Activated naive CD4-positive, alpha-beta T cell treated with anti-CD3 and anti-CD28 coated beads for 36 hours (primary cell): ENCODE measurements at regions of chr12 and their contacts with region 1.

Region 1: DNA sequence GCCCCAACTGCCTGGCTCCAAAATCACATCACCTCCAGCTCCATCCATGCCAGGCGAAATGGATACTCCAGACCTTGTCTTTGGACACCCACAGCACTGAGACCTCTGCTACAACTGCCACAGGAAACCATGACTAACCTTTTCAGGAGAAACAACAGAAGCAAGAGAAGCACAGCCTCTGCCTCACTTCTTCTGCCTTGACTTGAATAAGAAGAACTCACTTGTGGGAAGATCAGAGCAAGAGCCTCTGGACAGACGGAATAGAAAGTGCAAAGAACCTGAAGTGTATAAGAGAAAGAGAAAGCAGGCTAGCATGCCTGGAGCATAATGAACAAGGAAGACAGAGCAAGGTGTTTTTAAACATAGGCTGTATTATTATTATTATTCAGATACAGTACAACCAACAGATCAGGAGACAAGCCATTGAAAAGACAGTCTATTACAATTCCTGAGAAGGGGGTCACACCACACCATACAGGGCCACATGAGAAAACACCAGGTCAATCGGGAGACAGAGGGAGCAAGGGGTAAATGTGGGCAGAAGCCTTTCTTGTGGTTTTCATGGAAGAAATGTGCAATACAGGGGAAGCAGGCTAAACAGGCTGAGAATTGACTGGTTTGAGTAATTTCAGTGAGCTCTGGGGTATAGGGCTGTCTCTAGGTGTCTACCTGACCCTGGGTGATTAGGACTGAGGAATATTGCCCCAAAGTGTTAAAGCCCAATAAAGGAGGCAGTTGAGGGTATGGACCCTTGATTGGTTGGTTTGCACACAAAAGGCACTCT is 7.4 kb upstream of the OR10P1 start:
- DNase-seq: peak; percentile 39
- H3K4me3 Mint-ChIP-seq: no peak overlapping the region
- H3K27ac Mint-ChIP-seq: peak overlapping the region; percentile 1
- H3K4me1 Mint-ChIP-seq: peaks cover 20% of the 10 kb centered on the region
- H3K27me3 Mint-ChIP-seq: peaks cover 15% of the 10 kb centered on the region

Region 2: DNA sequence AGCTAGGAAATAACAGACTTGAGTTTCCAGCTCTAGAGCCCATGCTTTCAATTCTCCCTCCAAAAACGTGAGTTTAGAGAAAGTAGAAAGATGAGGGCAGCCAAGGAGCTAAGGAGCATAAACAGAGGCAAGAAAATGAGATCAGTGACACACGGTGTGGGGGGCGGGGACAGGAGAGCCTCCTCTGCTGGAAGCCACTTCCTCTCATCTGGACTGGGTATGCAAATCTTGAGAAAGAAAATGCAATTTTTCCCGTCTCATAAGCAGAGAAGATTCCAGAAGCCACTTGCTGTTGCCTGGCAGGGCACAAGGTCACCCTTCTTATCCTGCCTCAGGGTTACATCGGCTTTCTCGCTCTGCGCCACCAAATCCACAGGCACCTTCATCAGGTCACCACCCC is 13.4 kb after region 1 on chr12:
- CTCF ChIA-PET with region 1: interaction called, 36 read pairs
- intact Hi-C with region 1: no loop called
- DNase-seq: peak; percentile 67
- H3K4me3 Mint-ChIP-seq: no peak overlapping the region
- H3K27ac Mint-ChIP-seq: no peak overlapping the region
- H3K4me1 Mint-ChIP-seq: peaks cover 25% of the 10 kb centered on the region
- H3K27me3 Mint-ChIP-seq: peaks cover 2% of the 10 kb centered on the region